Activated naive CD8-positive, alpha-beta T cell treated with anti-CD3 and anti-CD28 coated beads, Interleukin-2, amount 10 ng/mL, durations not matched to agents 7 days and 5 days (primary cell): ENCODE measurements at regions of chr16 and their contacts with region 1.

Region 1: GRCh38 chr16:8868416-8869211 is at the start of gene CARHSP1:
- DNase-seq: peak; percentile 89
- ATAC-seq: peak; percentile 76
- H3K4me3 Mint-ChIP-seq: peak within 1 kb of the TSS; percentile 96
- H3K27ac Mint-ChIP-seq: peak within 1 kb of the TSS; percentile 97
- H3K4me1 Mint-ChIP-seq: peaks cover 40% of the 10 kb centered on the region
- H3K27me3 Mint-ChIP-seq: no peaks in the 10 kb centered on the region
- total RNA-seq, gene CARHSP1: 157 to 173 TPM

Region 2: GRCh38 chr16:8797364-8798173 is 71.0 kb before region 1 on chr16 and contains the starts of genes PMM2 and TMEM186:
- POLR2A ChIA-PET with region 1: interaction called, 44 read pairs
- DNase-seq: peak; percentile 90
- ATAC-seq: peak; percentile 98
- H3K4me3 Mint-ChIP-seq: peak within 1 kb of the TSS; percentile 93
- H3K27ac Mint-ChIP-seq: peak within 1 kb of the TSS; percentile 89
- H3K4me1 Mint-ChIP-seq: peaks cover 34% of the 10 kb centered on the region
- H3K27me3 Mint-ChIP-seq: no peaks in the 10 kb centered on the region
- total RNA-seq, gene PMM2: 36.4 to 38.5 TPM
- total RNA-seq, gene TMEM186: 11.9 to 12.6 TPM

Region 3: GRCh38 chr16:8816967-8817655 is 51.5 kb before region 1 on chr16:
- POLR2A ChIA-PET with region 1: interaction called, 26 read pairs
- DNase-seq: no peak
- ATAC-seq: peak; percentile 89
- H3K4me3 Mint-ChIP-seq: peak overlapping the region; percentile 67
- H3K27ac Mint-ChIP-seq: peak overlapping the region; percentile 90
- H3K4me1 Mint-ChIP-seq: peaks cover 18% of the 10 kb centered on the region
- H3K27me3 Mint-ChIP-seq: no peaks in the 10 kb centered on the region

Region 4: DNA sequence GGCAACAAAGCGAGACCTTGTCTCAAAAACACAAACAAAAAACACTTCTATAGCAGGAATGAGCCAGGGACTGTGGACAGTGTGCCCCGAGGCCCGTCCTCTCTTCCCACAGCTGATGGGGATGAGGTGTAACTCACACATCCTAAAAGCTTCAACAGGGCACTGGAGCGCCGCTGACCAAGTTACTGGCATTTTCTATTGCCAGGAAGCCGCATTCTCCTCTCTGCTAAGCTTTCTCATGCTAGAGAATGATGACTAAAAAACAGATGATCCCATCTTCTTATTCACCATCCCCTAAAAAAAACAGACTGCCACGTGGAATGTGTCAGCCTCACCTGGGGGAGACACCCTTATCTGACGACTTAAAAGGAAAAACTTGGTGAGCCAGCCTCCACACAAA is 16.1 kb before region 1 on chr16:
- POLR2A ChIA-PET with region 1: interaction called, 16 read pairs
- DNase-seq: no peak
- ATAC-seq: no peak
- H3K4me3 Mint-ChIP-seq: no peak overlapping the region
- H3K27ac Mint-ChIP-seq: peak overlapping the region; percentile 58
- H3K4me1 Mint-ChIP-seq: peaks cover 29% of the 10 kb centered on the region
- H3K27me3 Mint-ChIP-seq: no peaks in the 10 kb centered on the region

Region 5: GRCh38 chr16:9072806-9073341 is 204.3 kb after region 1 on chr16:
- POLR2A ChIA-PET with region 1: interaction called, 17 read pairs
- DNase-seq: no peak
- ATAC-seq: peak; percentile 66
- H3K4me3 Mint-ChIP-seq: peak overlapping the region; percentile 73
- H3K27ac Mint-ChIP-seq: peak overlapping the region; percentile 94
- H3K4me1 Mint-ChIP-seq: peaks cover 36% of the 10 kb centered on the region
- H3K27me3 Mint-ChIP-seq: no peaks in the 10 kb centered on the region